ENCODE measurements at regions of chr21 and their contacts with region 1.

Region 1: GRCh38 chr21:28959367-28960099 is 33.1 kb downstream of the LTN1 start:
- DNase-seq: no peak
- ATAC-seq: no peak

Region 2: GRCh38 chr21:28871388-28872010 is 88.0 kb before region 1 on chr21:
- intact Hi-C with region 1: loop called (anchors 10 kb)
- DNase-seq: no peak
- ATAC-seq: no peak

Region 3: GRCh38 chr21:28916150-28916893 is 43.2 kb before region 1 on chr21:
- intact Hi-C with region 1: no loop called
- DNase-seq: no peak
- ATAC-seq: peak; percentile 71

Measured in sciatic nerve (tissue), 2 donors.